B cell (primary cell): ENCODE measurements at regions of chr3 and their contacts with region 1.

Region 1: GRCh38 chr3:187066228-187066995 is 72.9 kb downstream of the RPL39L start:
- DNase-seq: peak; percentile 87
- ATAC-seq: peak; percentile 31
- H3K4me3 ChIP-seq: peak overlapping the region in 3 of 5 experiments; percentile 19 to 45 (median 26)
- H3K4me3 Mint-ChIP-seq: peak overlapping the region; percentile 81
- H3K27ac ChIP-seq: peak overlapping the region; percentile 97 to 98
- H3K27ac Mint-ChIP-seq: peak overlapping the region; percentile 97
- H3K4me1 ChIP-seq: peaks cover 70 to 86% of the 10 kb centered on the region in 2 donors
- H3K4me1 Mint-ChIP-seq: peaks cover 87% of the 10 kb centered on the region
- H3K27me3 ChIP-seq: no peaks in the 10 kb centered on the region
- H3K27me3 Mint-ChIP-seq: no peaks in the 10 kb centered on the region
- CTCF ChIP-seq: peak; percentile 40

Region 2: DNA sequence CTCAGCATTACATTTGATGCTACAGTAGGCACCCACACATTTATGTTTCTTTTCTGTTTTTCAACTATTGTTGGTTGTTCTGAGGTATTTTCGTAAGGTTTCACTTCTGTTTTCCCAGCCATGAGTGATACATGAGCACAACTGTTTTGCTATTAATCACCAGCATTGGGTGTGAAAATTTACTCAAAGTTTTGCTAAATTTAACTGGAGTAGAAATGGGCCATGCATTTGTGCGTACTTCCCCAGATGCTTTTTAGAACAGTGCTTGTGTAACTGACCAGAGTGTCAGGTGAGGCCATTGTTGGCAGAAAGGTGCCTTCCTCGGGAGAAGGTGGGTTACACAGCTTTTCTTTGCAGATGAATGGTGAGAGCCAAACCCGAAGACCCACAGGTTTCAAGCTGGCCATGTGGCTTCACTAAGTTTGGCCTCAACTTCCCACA is 65.7 kb before region 1 on chr3:
- CTCF ChIA-PET with region 1: no interaction called
- POLR2A ChIA-PET with region 1: interaction called, 7 read pairs
- intact Hi-C with region 1: loop called (anchors 1 kb)
- DNase-seq: peak; percentile 86
- ATAC-seq: peak; percentile 77
- H3K4me3 ChIP-seq: peak overlapping the region in 3 of 5 experiments; percentile 12 to 32 (median 22)
- H3K4me3 Mint-ChIP-seq: peak overlapping the region; percentile 88
- H3K27ac ChIP-seq: peak overlapping the region; percentile 94 to 98
- H3K27ac Mint-ChIP-seq: peak overlapping the region; percentile 99
- H3K4me1 ChIP-seq: peaks cover 82 to 93% of the 10 kb centered on the region in 2 donors
- H3K4me1 Mint-ChIP-seq: peaks cover 87% of the 10 kb centered on the region
- H3K27me3 ChIP-seq: no peaks in the 10 kb centered on the region
- H3K27me3 Mint-ChIP-seq: no peaks in the 10 kb centered on the region
- CTCF ChIP-seq: no peak

Region 3: GRCh38 chr3:187031934-187032333 is 34.5 kb before region 1 on chr3:
- CTCF ChIA-PET with region 1: interaction called, 10 read pairs
- POLR2A ChIA-PET with region 1: interaction called, 17 read pairs
- intact Hi-C with region 1: loop called (anchors 2 kb)
- DNase-seq: no peak
- ATAC-seq: no peak
- H3K4me3 ChIP-seq: peak overlapping the region in 2 of 5 experiments; percentile 5 to 20
- H3K4me3 Mint-ChIP-seq: peak overlapping the region; percentile 80
- H3K27ac ChIP-seq: peak overlapping the region; percentile 72 to 84
- H3K27ac Mint-ChIP-seq: peak overlapping the region; percentile 84
- H3K4me1 ChIP-seq: peaks cover 61 to 66% of the 10 kb centered on the region in 2 donors
- H3K4me1 Mint-ChIP-seq: peaks cover 86% of the 10 kb centered on the region
- H3K27me3 ChIP-seq: no peaks in the 10 kb centered on the region
- H3K27me3 Mint-ChIP-seq: no peaks in the 10 kb centered on the region
- CTCF ChIP-seq: no peak

Region 4: GRCh38 chr3:187101184-187102072 is 35.0 kb after region 1 on chr3:
- CTCF ChIA-PET with region 1: no interaction called
- POLR2A ChIA-PET with region 1: no interaction called
- intact Hi-C with region 1: loop called (anchors 5 kb)
- DNase-seq: peak; percentile 51
- ATAC-seq: peak; percentile 45
- H3K4me3 ChIP-seq: peak overlapping the region in 4 of 5 experiments; percentile 3 to 46 (median 24)
- H3K4me3 Mint-ChIP-seq: peak overlapping the region; percentile 74
- H3K27ac ChIP-seq: peak overlapping the region in 1 of 2 donors; percentile 14
- H3K27ac Mint-ChIP-seq: peak overlapping the region; percentile 26
- H3K4me1 ChIP-seq: peaks cover 10 to 11% of the 10 kb centered on the region in 2 donors
- H3K4me1 Mint-ChIP-seq: peaks cover 30% of the 10 kb centered on the region
- H3K27me3 ChIP-seq: no peaks in the 10 kb centered on the region
- H3K27me3 Mint-ChIP-seq: no peaks in the 10 kb centered on the region
- CTCF ChIP-seq: no peak

Region 5: GRCh38 chr3:187507268-187507667 is 440.9 kb after region 1 on chr3:
- CTCF ChIA-PET with region 1: no interaction called
- POLR2A ChIA-PET with region 1: no interaction called
- intact Hi-C with region 1: no loop called
- DNase-seq: no peak
- ATAC-seq: no peak
- H3K4me3 ChIP-seq: no peak overlapping the region
- H3K4me3 Mint-ChIP-seq: no peak overlapping the region
- H3K27ac ChIP-seq: no peak overlapping the region
- H3K27ac Mint-ChIP-seq: no peak overlapping the region
- H3K4me1 ChIP-seq: no peaks in the 10 kb centered on the region
- H3K4me1 Mint-ChIP-seq: no peaks in the 10 kb centered on the region
- H3K27me3 ChIP-seq: peaks cover 0 to 4% (median 0%) of the 10 kb centered on the region in 4 experiments
- H3K27me3 Mint-ChIP-seq: peaks cover 35% of the 10 kb centered on the region
- CTCF ChIP-seq: no peak

Region 6: DNA sequence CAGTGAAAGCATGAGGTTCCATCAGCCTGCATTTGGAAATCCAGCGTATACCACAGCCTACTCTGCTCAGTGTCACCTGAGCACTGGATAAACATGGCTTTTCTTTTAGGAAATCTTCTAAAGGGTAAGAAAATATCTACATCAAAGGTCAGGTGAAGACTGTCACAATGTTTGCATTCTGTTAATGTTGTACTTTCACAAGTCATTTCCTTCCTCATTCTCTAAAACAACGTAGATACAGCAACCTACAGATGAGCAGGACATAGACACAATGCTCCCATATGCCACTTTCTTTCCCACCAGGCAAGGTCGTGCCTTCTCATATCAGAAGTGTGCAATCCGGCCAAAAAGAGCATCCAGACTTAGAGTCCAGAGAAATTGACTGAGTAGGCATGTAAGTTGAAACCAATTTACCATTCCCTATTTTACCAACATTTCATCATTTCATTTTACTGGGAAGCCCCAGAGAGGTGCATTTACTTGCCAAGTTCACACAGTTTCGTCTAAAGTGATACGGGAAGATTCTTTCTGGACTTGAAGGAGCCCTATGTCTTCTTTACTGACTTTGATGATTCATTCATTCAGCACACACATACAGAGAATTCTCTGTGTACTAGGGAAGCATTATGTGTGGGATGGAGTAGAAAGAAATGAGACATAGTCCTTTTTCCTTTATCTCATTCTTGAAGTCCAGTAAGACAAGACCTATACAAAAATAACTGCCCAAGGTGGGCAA is 1056.9 kb after region 1 on chr3:
- CTCF ChIA-PET with region 1: no interaction called
- POLR2A ChIA-PET with region 1: interaction called, 10 read pairs
- intact Hi-C with region 1: no loop called
- DNase-seq: peak; percentile 57
- ATAC-seq: peak; percentile 68
- H3K4me3 ChIP-seq: peak overlapping the region in 1 of 5 experiments; percentile 40
- H3K4me3 Mint-ChIP-seq: peak overlapping the region; percentile 61
- H3K27ac ChIP-seq: peak overlapping the region in 1 of 2 donors; percentile 57
- H3K27ac Mint-ChIP-seq: peak overlapping the region; percentile 59
- H3K4me1 ChIP-seq: peaks cover 16 to 18% of the 10 kb centered on the region in 2 donors
- H3K4me1 Mint-ChIP-seq: peaks cover 21% of the 10 kb centered on the region
- H3K27me3 ChIP-seq: no peaks in the 10 kb centered on the region
- H3K27me3 Mint-ChIP-seq: peaks cover 8% of the 10 kb centered on the region
- CTCF ChIP-seq: no peak